ENCODE measurements at regions of chr7 and their contacts with region 1.

Region 1: GRCh38 chr7:97078023-97078969 is 39.2 kb upstream of the SDHAF3 start:
- DNase-seq: no peak
- H3K4me3 ChIP-seq: no peak overlapping the region
- H3K27ac ChIP-seq: no peak overlapping the region
- H3K4me1 ChIP-seq: no peaks in the 10 kb centered on the region
- H3K27me3 ChIP-seq: no peaks in the 10 kb centered on the region
- CTCF ChIP-seq: no peak
- EP300 ChIP-seq: no peak
- RAD21 ChIP-seq: no peak

Region 2: DNA sequence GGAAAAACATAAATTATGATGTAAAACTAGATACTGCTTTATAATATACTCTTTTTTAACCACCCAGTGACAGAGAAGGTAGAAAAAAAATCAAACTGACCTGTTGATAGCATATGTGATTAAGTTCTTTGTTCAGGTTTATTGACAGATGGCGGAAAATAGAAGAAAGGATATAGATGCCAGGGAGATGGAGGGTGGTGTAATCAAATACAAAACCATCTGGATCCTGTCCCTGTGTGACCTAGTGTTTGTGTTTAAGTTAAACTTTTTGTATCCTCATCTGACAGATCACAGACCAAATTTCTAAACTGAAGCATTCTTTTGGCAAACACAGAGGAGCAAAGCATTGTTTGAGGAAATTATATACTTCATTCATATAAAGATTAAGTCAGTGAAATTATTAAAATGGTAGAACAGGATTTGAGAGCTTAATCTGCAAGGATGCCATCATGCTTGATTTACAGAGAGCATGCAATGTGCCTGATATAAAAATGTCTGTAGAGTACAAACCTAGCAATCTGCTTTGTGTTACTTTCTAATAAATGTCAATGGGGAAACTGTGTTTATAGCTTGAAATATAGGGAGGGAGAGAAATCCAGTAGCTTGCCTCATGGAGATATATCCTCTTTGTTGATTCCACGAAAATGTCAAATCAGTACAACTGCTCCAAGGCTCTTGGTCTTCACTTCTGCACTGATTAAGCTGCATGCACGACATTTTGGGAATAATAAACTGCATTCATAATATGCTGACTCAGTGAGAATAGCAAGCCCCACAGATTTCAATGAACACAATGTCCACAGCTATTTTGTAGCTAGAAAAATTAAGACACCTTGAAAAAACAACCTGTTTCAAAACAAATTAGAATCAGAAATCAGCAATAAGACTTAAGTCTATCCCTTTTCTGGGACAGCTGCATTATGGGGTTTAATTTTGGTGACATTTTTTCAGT is 407.7 kb before region 1 on chr7:
- CTCF ChIA-PET with region 1: no interaction called
- POLR2A ChIA-PET with region 1: no interaction called
- DNase-seq: peak; percentile 59
- H3K4me3 ChIP-seq: no peak overlapping the region
- H3K27ac ChIP-seq: peak overlapping the region in 1 of 2 experiments; percentile 95; a peak in 2 of 4 replicates
- H3K4me1 ChIP-seq: peaks cover 0 to 14% of the 10 kb centered on the region in 2 experiments; a peak in 2 of 4 replicates
- H3K27me3 ChIP-seq: no peaks in the 10 kb centered on the region
- CTCF ChIP-seq: no peak
- EP300 ChIP-seq: peak in 1 of 2 experiments; percentile 82; a peak in 2 of 4 replicates
- RAD21 ChIP-seq: peak; percentile 38

Region 3: GRCh38 chr7:97064967-97065587 is 13.2 kb before region 1 on chr7:
- CTCF ChIA-PET with region 1: interaction called, 32 read pairs
- POLR2A ChIA-PET with region 1: no interaction called
- DNase-seq: peak; percentile 78
- H3K4me3 ChIP-seq: peak overlapping the region in 1 of 2 experiments; percentile 18; a peak in 1 of 4 replicates
- H3K27ac ChIP-seq: no peak overlapping the region
- H3K4me1 ChIP-seq: no peaks in the 10 kb centered on the region
- H3K27me3 ChIP-seq: no peaks in the 10 kb centered on the region
- CTCF ChIP-seq: peak; percentile 98
- EP300 ChIP-seq: no peak
- RAD21 ChIP-seq: peak; percentile 74